CD4-positive, alpha-beta T cell (primary cell): ENCODE measurements at regions of chr19 and their contacts with region 1.

Region 1: DNA sequence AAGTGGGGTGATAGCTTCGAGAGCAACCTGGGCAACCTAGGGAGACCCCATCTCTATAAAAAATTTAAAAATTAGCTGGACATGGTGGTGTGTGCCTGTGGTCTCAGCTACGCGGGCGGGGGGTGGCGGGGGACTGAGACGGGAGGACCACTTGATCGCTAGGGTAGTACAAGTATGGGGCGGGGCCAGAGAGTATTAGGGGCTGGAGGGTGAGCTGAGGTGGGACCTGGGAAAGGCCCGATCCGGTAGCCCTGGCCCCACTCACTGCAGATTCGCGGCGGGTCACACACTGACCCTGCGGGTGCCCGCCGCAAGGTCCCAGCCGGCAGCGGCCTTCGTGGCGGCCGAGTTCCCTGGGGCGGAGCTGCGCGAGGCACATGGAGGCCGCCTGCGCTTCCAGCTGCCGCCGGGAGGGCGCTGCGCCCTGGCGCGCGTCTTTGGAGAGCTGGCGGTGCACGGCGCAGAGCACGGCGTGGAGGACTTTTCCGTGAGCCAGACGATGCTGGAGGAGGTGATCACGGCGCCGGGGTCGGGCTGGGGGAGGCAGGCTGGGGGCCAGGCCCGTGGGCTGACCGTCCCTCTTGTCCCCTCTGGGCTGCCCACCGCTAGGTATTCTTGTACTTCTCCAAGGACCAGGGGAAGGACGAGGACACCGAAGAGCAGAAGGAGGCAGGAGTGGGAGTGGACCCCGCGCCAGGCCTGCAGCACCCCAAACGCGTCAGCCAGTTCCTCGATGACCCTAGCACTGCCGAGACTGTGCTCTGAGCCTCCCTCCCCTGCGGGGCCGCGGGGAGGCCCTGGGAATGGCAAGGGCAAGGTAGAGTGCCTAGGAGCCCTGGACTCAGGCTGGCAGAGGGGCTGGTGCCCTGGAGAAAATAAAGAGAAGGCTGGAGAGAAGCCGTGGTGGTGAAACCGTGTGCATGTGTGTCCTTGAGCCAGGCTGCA is 2.0 kb upstream of the ARHGAP45 start:
- DNase-seq: peak in 12 of 14 experiments; percentile 53 to 90 (median 70)
- ATAC-seq: peak; percentile 37
- H3K4me3 ChIP-seq: no peak overlapping the region
- H3K4me3 Mint-ChIP-seq: peak overlapping the region; percentile 90
- H3K27ac ChIP-seq: peak overlapping the region in 1 of 2 donors; percentile 98
- H3K27ac Mint-ChIP-seq: peak overlapping the region; percentile 96
- H3K4me1 ChIP-seq: peaks cover 62% of the 10 kb centered on the region
- H3K4me1 Mint-ChIP-seq: peaks cover 54% of the 10 kb centered on the region
- H3K27me3 ChIP-seq: no peaks in the 10 kb centered on the region
- H3K27me3 Mint-ChIP-seq: no peaks in the 10 kb centered on the region
- CTCF ChIP-seq: peak; percentile 78

Region 2: GRCh38 chr19:907183-907853 is 157.6 kb before region 1 on chr19:
- CTCF ChIA-PET with region 1: no interaction called
- POLR2A ChIA-PET with region 1: interaction called, 13 read pairs
- intact Hi-C with region 1: no loop called
- DNase-seq: peak in 4 of 14 experiments; percentile 47 to 62 (median 53)
- ATAC-seq: no peak
- H3K4me3 ChIP-seq: no peak overlapping the region
- H3K4me3 Mint-ChIP-seq: peak overlapping the region; percentile 71
- H3K27ac ChIP-seq: peak overlapping the region; percentile 69 to 99
- H3K27ac Mint-ChIP-seq: peak overlapping the region; percentile 100
- H3K4me1 ChIP-seq: peaks cover 81% of the 10 kb centered on the region
- H3K4me1 Mint-ChIP-seq: peaks cover 56% of the 10 kb centered on the region
- H3K27me3 ChIP-seq: no peaks in the 10 kb centered on the region
- H3K27me3 Mint-ChIP-seq: no peaks in the 10 kb centered on the region
- CTCF ChIP-seq: no peak

Region 3: GRCh38 chr19:1020868-1021425 is 44.0 kb before region 1 on chr19 and contains the start of gene TMEM259:
- CTCF ChIA-PET with region 1: interaction called, 13 read pairs
- POLR2A ChIA-PET with region 1: interaction called, 143 read pairs
- intact Hi-C with region 1: loop called (anchors 2 to 5 kb)
- DNase-seq: peak; percentile 94 to 99 (median 98)
- ATAC-seq: peak; percentile 84
- H3K4me3 ChIP-seq: peak within 1 kb of the TSS; percentile 94
- H3K4me3 Mint-ChIP-seq: peak within 1 kb of the TSS; percentile 98
- H3K27ac ChIP-seq: peak within 1 kb of the TSS; percentile 96 to 99
- H3K27ac Mint-ChIP-seq: peak within 1 kb of the TSS; percentile 99
- H3K4me1 ChIP-seq: peaks cover 66% of the 10 kb centered on the region
- H3K4me1 Mint-ChIP-seq: peaks cover 33% of the 10 kb centered on the region
- H3K27me3 ChIP-seq: no peaks in the 10 kb centered on the region
- H3K27me3 Mint-ChIP-seq: peaks cover 7% of the 10 kb centered on the region
- CTCF ChIP-seq: no peak
- total RNA-seq, gene TMEM259: 388 to 390 TPM

Region 4: GRCh38 chr19:1039646-1040475 is 25.1 kb before region 1 on chr19 and contains the start of gene ABCA7:
- CTCF ChIA-PET with region 1: interaction called, 6 read pairs
- POLR2A ChIA-PET with region 1: interaction called, 167 read pairs
- intact Hi-C with region 1: loop called in 1 of 2 experiments (anchors 2 kb)
- DNase-seq: peak; percentile 99 to 100 (median 99)
- ATAC-seq: peak; percentile 90
- H3K4me3 ChIP-seq: peak within 1 kb of the TSS; percentile 91
- H3K4me3 Mint-ChIP-seq: peak within 1 kb of the TSS; percentile 100
- H3K27ac ChIP-seq: peak within 1 kb of the TSS; percentile 43 to 51
- H3K27ac Mint-ChIP-seq: peak within 1 kb of the TSS; percentile 92
- H3K4me1 ChIP-seq: peaks cover 81% of the 10 kb centered on the region
- H3K4me1 Mint-ChIP-seq: peaks cover 51% of the 10 kb centered on the region
- H3K27me3 ChIP-seq: no peaks in the 10 kb centered on the region
- H3K27me3 Mint-ChIP-seq: no peaks in the 10 kb centered on the region
- CTCF ChIP-seq: no peak
- total RNA-seq, gene ABCA7: 114 to 118 TPM

Region 5: GRCh38 chr19:1087813-1088415 is 23.0 kb after region 1 on chr19:
- CTCF ChIA-PET with region 1: interaction called, 42 read pairs
- POLR2A ChIA-PET with region 1: interaction called, 1,253 read pairs
- intact Hi-C with region 1: loop called (anchors 2 kb)
- DNase-seq: peak in 10 of 14 experiments; percentile 44 to 87 (median 63)
- ATAC-seq: peak; percentile 58
- H3K4me3 ChIP-seq: no peak overlapping the region
- H3K4me3 Mint-ChIP-seq: peak overlapping the region; percentile 71
- H3K27ac ChIP-seq: peak overlapping the region; percentile 59 to 68
- H3K27ac Mint-ChIP-seq: peak overlapping the region; percentile 82
- H3K4me1 ChIP-seq: peaks cover 77% of the 10 kb centered on the region
- H3K4me1 Mint-ChIP-seq: peaks cover 27% of the 10 kb centered on the region
- H3K27me3 ChIP-seq: no peaks in the 10 kb centered on the region
- H3K27me3 Mint-ChIP-seq: no peaks in the 10 kb centered on the region
- CTCF ChIP-seq: peak; percentile 5

Region 6: DNA sequence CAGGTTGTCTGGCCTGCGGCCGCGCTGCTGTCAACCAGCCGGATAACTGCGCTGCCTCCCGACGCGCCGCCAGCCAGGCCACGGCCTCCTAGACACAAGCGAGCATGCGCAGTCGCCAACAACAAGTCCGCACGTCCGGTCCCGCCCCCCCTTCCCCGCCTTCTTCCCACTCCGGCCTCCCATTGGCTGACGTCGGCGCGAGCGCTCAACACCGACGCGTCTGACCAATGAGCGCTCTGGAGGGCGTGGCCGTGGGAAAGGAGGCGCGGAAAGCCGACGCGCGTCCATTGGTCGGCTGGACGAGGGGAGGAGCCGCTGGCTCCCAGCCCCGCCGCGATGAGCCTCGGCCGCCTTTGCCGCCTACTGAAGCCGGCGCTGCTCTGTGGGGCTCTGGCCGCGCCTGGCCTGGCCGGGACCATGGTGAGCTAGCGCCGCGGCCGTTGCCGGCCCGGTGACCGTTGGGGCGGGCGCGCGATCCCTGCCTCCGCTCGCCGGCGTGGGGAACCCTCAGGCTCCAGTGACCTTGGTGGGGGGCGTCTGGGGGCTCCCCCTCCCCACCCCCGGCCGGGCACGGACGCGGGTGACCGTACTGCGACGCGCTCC is 38.9 kb after region 1 on chr19 and contains the start of gene GPX4:
- CTCF ChIA-PET with region 1: interaction called, 8 read pairs
- POLR2A ChIA-PET with region 1: interaction called, 37 read pairs
- intact Hi-C with region 1: loop called (anchors 5 kb)
- DNase-seq: peak; percentile 97 to 100 (median 98)
- ATAC-seq: peak; percentile 89
- H3K4me3 ChIP-seq: peak within 1 kb of the TSS; percentile 76
- H3K4me3 Mint-ChIP-seq: peak within 1 kb of the TSS; percentile 89
- H3K27ac ChIP-seq: peak within 1 kb of the TSS; percentile 69 to 96
- H3K27ac Mint-ChIP-seq: peak within 1 kb of the TSS; percentile 95
- H3K4me1 ChIP-seq: peaks cover 62% of the 10 kb centered on the region
- H3K4me1 Mint-ChIP-seq: peaks cover 31% of the 10 kb centered on the region
- H3K27me3 ChIP-seq: no peaks in the 10 kb centered on the region
- H3K27me3 Mint-ChIP-seq: no peaks in the 10 kb centered on the region
- CTCF ChIP-seq: no peak
- total RNA-seq, gene GPX4: 174 to 175 TPM

Region 7: GRCh38 chr19:1189419-1189818 is 124.5 kb after region 1 on chr19:
- CTCF ChIA-PET with region 1: interaction called, 3 read pairs
- POLR2A ChIA-PET with region 1: interaction called, 12 read pairs
- intact Hi-C with region 1: loop called (anchors 5 kb)
- DNase-seq: peak in 13 of 14 experiments; percentile 31 to 79 (median 50)
- ATAC-seq: peak; percentile 46
- H3K4me3 ChIP-seq: no peak overlapping the region
- H3K4me3 Mint-ChIP-seq: peak overlapping the region; percentile 64
- H3K27ac ChIP-seq: no peak overlapping the region
- H3K27ac Mint-ChIP-seq: peak overlapping the region; percentile 72
- H3K4me1 ChIP-seq: peaks cover 50% of the 10 kb centered on the region
- H3K4me1 Mint-ChIP-seq: peaks cover 22% of the 10 kb centered on the region
- H3K27me3 ChIP-seq: no peaks in the 10 kb centered on the region
- H3K27me3 Mint-ChIP-seq: no peaks in the 10 kb centered on the region
- CTCF ChIP-seq: no peak